H1 (cell line): ENCODE measurements at regions of chr15 and their contacts with region 1.

Region 1: GRCh38 chr15:71575474-71576045 is 234.8 kb upstream of the NR2E3 start:
- DNase-seq: no peak
- H3K4me3 ChIP-seq: no peak overlapping the region
- H3K27ac ChIP-seq: no peak overlapping the region
- H3K4me1 ChIP-seq: peaks cover 0 to 3% (median 0%) of the 10 kb centered on the region in 4 experiments; a peak in 2 of 7 replicates
- H3K27me3 ChIP-seq: no peaks in the 10 kb centered on the region
- CTCF ChIP-seq: peak in 2 of 3 experiments; percentile 36 to 47; a peak in 2 of 4 replicates
- EP300 ChIP-seq: no peak
- POLR2A ChIP-seq: no peak
- RAD21 ChIP-seq: peak; percentile 59 to 62

Region 2: GRCh38 chr15:71448688-71449114 is 126.9 kb before region 1 on chr15:
- CTCF ChIA-PET with region 1: interaction called, 14 read pairs
- POLR2A ChIA-PET with region 1: no interaction called
- DNase-seq: peak; percentile 39 to 79
- H3K4me3 ChIP-seq: no peak overlapping the region
- H3K27ac ChIP-seq: no peak overlapping the region
- H3K4me1 ChIP-seq: peaks cover 0 to under 1% (median 0%) of the 10 kb centered on the region in 4 experiments; a peak in 2 of 7 replicates
- H3K27me3 ChIP-seq: no peaks in the 10 kb centered on the region
- CTCF ChIP-seq: peak in 2 of 3 experiments; percentile 73 to 90; a peak in 3 of 4 replicates
- EP300 ChIP-seq: no peak
- POLR2A ChIP-seq: no peak
- RAD21 ChIP-seq: peak; percentile 89 to 92

Region 3: DNA sequence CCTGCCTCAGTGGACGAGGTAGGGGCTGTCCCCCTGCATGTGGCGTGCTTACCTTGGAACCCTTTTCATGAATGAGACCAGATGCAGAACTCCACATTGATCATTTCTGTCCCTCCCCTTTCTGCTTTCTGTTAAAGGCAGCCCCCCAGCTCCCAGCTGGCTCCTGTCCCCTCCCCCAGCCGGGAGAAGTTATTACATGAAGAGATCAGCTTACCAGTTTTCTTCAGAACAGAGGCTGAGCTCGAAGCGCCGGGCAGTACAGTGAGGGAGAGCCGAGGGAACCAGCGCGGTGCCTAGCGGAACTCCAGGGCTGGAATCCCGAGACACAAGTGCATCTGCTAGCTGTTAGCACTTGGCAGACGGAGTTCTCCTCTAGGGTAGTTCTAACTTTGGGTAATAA is 28.5 kb before region 1 on chr15:
- CTCF ChIA-PET with region 1: interaction called, 63 read pairs
- POLR2A ChIA-PET with region 1: no interaction called
- DNase-seq: no peak
- H3K4me3 ChIP-seq: no peak overlapping the region
- H3K27ac ChIP-seq: no peak overlapping the region
- H3K4me1 ChIP-seq: peaks cover 0 to 7% (median 2%) of the 10 kb centered on the region in 4 experiments; a peak in 1 of 7 replicates
- H3K27me3 ChIP-seq: no peaks in the 10 kb centered on the region
- CTCF ChIP-seq: no peak
- EP300 ChIP-seq: no peak
- POLR2A ChIP-seq: no peak
- RAD21 ChIP-seq: no peak

Region 4: GRCh38 chr15:71596672-71597071 is 21.1 kb after region 1 on chr15:
- CTCF ChIA-PET with region 1: interaction called, 29 read pairs
- POLR2A ChIA-PET with region 1: no interaction called
- DNase-seq: no peak
- H3K4me3 ChIP-seq: no peak overlapping the region
- H3K27ac ChIP-seq: no peak overlapping the region
- H3K4me1 ChIP-seq: peaks cover 0 to 4% (median 2%) of the 10 kb centered on the region in 4 experiments; a peak in 1 of 7 replicates
- H3K27me3 ChIP-seq: no peaks in the 10 kb centered on the region
- CTCF ChIP-seq: no peak
- EP300 ChIP-seq: peak in 1 of 2 experiments; percentile 53; a peak in 1 of 3 replicates
- POLR2A ChIP-seq: no peak
- RAD21 ChIP-seq: no peak

Region 5: GRCh38 chr15:71634820-71635560 is 59.4 kb after region 1 on chr15:
- CTCF ChIA-PET with region 1: interaction called, 30 read pairs
- POLR2A ChIA-PET with region 1: no interaction called
- DNase-seq: no peak
- H3K4me3 ChIP-seq: no peak overlapping the region
- H3K27ac ChIP-seq: no peak overlapping the region
- H3K4me1 ChIP-seq: peaks cover 0 to 7% (median 2%) of the 10 kb centered on the region in 4 experiments; a peak in 4 of 7 replicates
- H3K27me3 ChIP-seq: no peaks in the 10 kb centered on the region
- CTCF ChIP-seq: no peak
- EP300 ChIP-seq: no peak
- POLR2A ChIP-seq: no peak
- RAD21 ChIP-seq: no peak

Region 6: DNA sequence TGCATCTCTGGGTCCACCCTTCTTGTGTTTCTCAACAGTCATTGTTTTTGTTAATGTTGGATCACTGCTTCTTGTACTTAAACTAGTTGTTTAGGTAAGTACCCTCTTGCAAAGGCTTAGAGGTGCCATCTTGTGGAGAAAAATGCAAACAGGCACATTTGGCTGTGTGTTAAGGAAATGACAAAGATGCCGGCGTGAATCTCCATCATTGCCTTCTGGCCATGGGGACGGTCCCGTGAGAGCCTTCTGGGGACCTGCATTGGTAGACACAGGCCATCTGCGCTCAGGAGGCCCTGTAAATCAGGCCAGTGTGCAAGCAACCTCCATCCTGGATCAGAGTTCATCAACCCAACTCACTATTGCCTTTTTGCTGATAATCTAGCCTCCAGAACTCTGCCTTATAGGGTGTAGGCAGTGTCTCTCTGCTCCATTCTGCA is 76.2 kb after region 1 on chr15:
- CTCF ChIA-PET with region 1: interaction called, 122 read pairs
- POLR2A ChIA-PET with region 1: no interaction called
- DNase-seq: peak in 1 of 2 experiments; percentile 53
- H3K4me3 ChIP-seq: no peak overlapping the region
- H3K27ac ChIP-seq: no peak overlapping the region
- H3K4me1 ChIP-seq: peaks cover 0 to 16% (median 5%) of the 10 kb centered on the region in 4 experiments; a peak in 4 of 7 replicates
- H3K27me3 ChIP-seq: no peaks in the 10 kb centered on the region
- CTCF ChIP-seq: peak in 2 of 3 experiments; percentile 66 to 68; a peak in 3 of 4 replicates
- EP300 ChIP-seq: no peak
- POLR2A ChIP-seq: no peak
- RAD21 ChIP-seq: peak; percentile 82 to 88